Stomach (tissue), 19 donors: ENCODE measurements at regions of chr3 and their contacts with region 1.

Region 1: GRCh38 chr3:142279965-142280590 is 54.7 kb upstream of the GK5 start:
- DNase-seq: peak; percentile 41 to 89
- H3K4me3 ChIP-seq: no peak overlapping the region
- H3K27ac ChIP-seq: no peak overlapping the region
- H3K4me1 ChIP-seq: peaks cover 0 to 7% (median 0%) of the 10 kb centered on the region in 4 donors
- H3K27me3 ChIP-seq: no peaks in the 10 kb centered on the region
- CTCF ChIP-seq: peak in 5 of 7 experiments; percentile 39 to 79 (median 55)
- EP300 ChIP-seq: no peak
- POLR2A ChIP-seq: no peak

Region 2: DNA sequence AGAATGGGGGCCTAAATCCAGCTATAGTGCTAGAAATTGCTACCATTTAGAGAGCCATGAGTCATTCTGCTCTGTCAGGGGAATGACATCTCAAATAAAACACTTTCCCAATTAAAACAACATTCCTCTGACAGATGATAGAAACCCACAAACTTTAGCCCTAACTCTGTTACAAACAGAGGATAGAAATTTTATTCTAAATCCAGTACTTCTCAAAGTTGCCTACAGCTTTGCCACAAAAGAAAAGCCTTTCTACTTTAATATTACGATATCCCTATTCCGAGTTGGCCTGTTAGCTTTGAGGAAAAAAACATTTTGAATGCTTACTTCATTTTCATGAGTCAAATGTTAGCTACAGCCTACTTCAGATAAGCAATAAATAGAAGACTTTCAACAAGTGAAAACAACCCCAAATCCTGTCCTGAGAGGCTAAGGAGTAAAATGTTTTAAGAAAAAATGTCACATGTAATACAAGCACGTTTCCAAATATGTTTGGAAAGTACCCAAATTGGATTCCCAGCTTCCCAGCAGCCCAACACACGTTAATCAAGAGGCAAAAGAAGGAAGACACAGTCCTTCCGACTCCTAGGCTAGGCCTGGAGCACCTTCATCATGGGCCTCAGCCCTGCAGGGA is 320.0 kb before region 1 on chr3:
- intact Hi-C with region 1: loop called (anchors 10 kb)
- DNase-seq: no peak
- H3K4me3 ChIP-seq: no peak overlapping the region
- H3K27ac ChIP-seq: peak overlapping the region; percentile 17 to 69 (median 65)
- H3K4me1 ChIP-seq: peaks cover 0 to 8% (median 0%) of the 10 kb centered on the region in 4 donors
- H3K27me3 ChIP-seq: no peaks in the 10 kb centered on the region
- CTCF ChIP-seq: no peak
- EP300 ChIP-seq: no peak
- POLR2A ChIP-seq: no peak

Region 3: DNA sequence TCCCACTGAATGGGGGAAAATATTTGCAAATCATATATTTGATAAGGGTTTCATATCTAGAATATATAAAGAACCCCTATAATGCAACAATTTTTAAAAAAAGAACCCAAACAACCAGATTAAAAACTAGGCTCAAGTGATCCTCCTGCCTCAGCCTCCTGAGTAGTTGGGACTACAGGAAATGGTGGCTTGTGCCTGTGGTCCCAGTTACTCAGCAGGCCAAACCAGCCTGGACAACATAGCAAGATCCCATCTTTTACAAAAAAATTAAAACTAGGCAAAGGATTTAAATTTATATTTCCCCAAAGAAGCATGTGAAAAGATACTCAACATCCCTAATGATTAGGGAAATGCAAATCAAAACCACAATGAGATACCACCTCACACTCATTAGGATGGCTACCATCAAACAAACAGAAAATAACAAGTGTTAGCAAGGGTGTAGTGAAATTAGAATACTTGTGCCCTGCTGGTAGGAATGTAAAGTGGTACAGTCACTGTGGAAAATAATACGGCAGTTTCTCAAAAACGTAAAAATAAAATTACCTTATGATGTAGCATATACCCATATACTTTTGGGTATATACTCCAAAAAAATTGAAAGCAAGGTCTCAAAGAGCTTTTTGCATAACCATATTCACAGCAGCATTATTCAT is 150.4 kb before region 1 on chr3:
- intact Hi-C with region 1: loop called (anchors 10 kb)
- DNase-seq: no peak
- H3K4me3 ChIP-seq: no peak overlapping the region
- H3K27ac ChIP-seq: no peak overlapping the region
- H3K4me1 ChIP-seq: peaks cover 0 to 7% (median 2%) of the 10 kb centered on the region in 4 donors
- H3K27me3 ChIP-seq: no peaks in the 10 kb centered on the region
- CTCF ChIP-seq: no peak
- EP300 ChIP-seq: no peak
- POLR2A ChIP-seq: no peak